ENCODE measurements at regions of chr17 and their contacts with region 1.

Region 1: DNA sequence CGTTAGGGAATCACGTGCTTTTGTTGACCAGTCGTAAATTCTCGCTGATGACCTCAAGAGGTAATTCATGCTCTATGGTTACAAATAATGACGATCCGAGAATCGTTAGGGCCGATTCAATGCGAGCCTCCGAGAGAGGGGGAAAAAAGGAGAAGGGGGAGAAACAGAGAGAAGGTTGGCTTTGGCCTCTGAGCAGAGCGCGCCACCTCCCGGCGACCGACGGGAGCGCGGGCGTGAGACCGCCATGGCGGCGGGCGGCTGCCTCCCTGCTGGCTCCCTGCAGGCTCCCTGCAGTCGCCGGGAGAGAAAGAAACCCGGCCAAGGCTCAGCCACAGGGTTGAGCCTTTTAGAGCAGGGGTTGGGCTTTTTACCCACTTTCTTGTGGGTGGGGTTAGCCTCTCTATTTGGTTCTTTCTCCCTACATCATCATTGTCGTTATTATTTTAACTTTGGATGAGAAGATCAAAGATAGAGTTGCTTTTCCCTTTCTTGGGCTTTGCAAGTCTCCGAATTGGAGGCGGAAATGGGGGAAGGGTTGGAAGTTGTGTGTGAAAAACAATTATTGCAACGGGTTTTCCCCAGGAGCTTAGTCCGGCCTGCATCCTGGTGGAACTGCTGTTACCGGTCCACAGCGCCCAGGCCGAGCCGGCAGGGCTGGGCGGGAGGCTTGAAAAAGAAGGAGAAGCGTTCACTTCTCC is 410 bp upstream of the HOXB5 start:
- DNase-seq: peak; percentile 76
- H3K4me3 ChIP-seq: peak overlapping the region; percentile 18 to 30
- H3K27ac ChIP-seq: no peak overlapping the region
- H3K4me1 ChIP-seq: no peaks in the 10 kb centered on the region
- H3K27me3 ChIP-seq: no peaks in the 10 kb centered on the region
- CTCF ChIP-seq: peak in 2 of 3 experiments; percentile 64 to 65
- POLR2A ChIP-seq: no peak

Region 2: GRCh38 chr17:48406936-48407567 is 186.9 kb before region 1 on chr17:
- intact Hi-C with region 1: no loop called
- DNase-seq: no peak
- H3K4me3 ChIP-seq: no peak overlapping the region
- H3K27ac ChIP-seq: no peak overlapping the region
- H3K4me1 ChIP-seq: no peaks in the 10 kb centered on the region
- H3K27me3 ChIP-seq: no peaks in the 10 kb centered on the region
- CTCF ChIP-seq: no peak
- POLR2A ChIP-seq: no peak

Region 3: DNA sequence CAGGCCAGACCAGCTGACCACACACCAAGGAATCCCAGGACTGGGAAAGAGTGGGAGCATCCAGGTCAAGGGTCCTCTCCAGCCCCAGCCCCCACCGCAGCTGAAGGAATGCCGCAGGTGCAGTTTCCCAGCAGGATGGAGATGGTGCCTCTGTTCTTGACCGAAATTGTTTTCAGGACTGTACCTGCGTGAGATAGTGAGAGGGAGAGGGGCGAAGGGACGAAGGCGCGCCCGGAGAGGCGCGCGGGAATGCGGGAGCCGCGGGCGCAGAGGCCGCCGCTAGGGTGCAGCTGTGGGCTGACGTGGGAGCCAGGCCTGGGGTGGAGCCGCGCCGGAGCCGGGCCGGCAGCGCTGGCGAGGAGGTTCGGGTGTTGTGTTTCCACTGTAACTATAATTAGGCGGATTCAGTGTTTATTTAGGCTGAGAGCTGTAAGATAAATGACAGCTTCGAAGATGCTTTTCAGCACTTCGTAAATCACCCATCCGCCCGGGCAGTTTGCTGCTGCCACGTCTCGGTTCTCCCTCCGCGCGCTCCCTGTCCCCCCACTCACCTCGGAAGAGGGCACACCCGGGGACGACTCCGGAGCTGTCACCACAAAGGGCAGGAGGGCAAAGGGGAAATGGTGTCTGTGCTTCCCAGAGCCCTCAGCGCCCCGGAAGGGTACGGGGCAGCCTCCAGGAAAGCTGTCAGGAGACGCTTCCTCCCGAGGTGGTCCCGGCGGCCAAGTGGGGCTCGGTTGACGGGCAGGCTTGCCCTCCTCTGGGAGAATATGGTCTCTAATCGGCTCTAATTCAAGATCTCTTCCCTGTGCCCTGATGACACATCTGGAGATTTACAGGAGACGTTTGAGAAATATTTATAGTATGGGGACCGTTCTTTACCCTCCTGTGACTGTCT is 101.3 kb before region 1 on chr17:
- intact Hi-C with region 1: loop called (anchors 10 kb)
- DNase-seq: peak; percentile 53
- H3K4me3 ChIP-seq: peak overlapping the region; percentile 32 to 42
- H3K27ac ChIP-seq: no peak overlapping the region
- H3K4me1 ChIP-seq: no peaks in the 10 kb centered on the region
- H3K27me3 ChIP-seq: no peaks in the 10 kb centered on the region
- CTCF ChIP-seq: peak in 2 of 3 experiments; percentile 24 to 47
- POLR2A ChIP-seq: no peak

Measured in testis (tissue), 5 donors.